Activated CD4-positive, alpha-beta memory T cell treated with anti-CD3 and anti-CD28 coated beads for 36 hours (primary cell): ENCODE measurements at regions of chrX and their contacts with region 1.

Region 1: GRCh38 chrX:101759000-101759399 is 99.3 kb upstream of the ARMCX2 start:
- DNase-seq: peak; percentile 19
- H3K4me3 Mint-ChIP-seq: no peak overlapping the region
- H3K27ac Mint-ChIP-seq: no peak overlapping the region
- H3K4me1 Mint-ChIP-seq: no peaks in the 10 kb centered on the region
- H3K27me3 Mint-ChIP-seq: peaks cover 2% of the 10 kb centered on the region

Region 2: DNA sequence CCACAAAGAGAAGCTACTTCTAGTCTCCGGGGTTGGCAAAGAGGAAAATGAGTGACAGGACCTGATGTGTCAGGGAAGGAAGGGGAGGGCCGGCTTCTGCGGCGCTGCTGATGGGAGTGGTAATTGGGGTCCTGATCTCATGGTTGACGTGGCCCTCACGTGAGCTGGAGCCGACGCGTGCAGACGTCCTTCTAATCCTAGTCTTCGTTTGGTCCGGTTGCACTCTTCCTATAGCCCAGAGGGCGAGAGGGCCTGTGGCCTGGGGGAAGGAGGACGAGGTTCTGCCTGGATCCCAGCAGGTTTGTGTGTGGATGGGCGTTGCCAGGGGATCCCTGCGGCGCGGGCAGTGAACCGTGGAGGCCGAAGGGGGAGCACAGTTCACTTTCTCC is 208.6 kb before region 1 on chrX and contains the start of gene ARMCX1:
- CTCF ChIA-PET with region 1: no interaction called
- POLR2A ChIA-PET with region 1: no interaction called
- intact Hi-C with region 1: no loop called
- DNase-seq: peak; percentile 39
- H3K4me3 Mint-ChIP-seq: peak within 1 kb of the TSS; percentile 66
- H3K27ac Mint-ChIP-seq: no peak within 1 kb of the TSS
- H3K4me1 Mint-ChIP-seq: peaks cover 6% of the 10 kb centered on the region
- H3K27me3 Mint-ChIP-seq: peaks cover 14% of the 10 kb centered on the region
- total RNA-seq, gene ARMCX1: 1.4 to 1.6 TPM

Region 3: DNA sequence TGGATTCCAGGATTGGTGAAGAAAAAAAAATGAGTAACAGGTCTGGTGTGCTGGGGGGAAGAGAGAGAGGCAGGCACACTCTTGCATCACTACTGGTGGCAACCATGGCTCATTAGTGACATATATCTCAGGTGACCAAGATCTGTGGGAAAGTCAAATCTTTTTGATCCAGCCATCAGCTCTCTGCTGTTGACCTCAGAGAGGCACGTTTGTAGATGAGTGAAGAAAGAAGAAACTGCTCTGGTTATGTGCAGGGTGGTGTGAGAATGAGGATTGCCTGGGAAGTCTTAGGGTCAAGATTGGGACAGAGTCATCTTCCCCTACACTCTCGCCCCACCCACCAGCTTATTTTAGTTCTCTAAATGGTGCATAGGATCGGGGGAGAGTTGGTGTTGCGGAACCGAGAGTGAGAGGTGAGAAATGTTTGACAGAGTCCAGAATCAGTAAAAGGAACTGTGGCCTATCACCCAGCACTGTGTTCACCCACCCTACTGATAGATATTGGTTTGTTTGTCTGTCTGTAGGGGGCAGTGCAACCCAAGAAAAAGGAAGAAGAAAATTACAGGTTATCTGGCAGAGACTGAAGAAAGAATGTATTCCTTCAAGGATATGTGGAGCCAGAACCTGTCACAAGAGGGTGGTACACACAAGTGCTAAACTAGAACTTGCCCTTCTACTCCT is 163.1 kb before region 1 on chrX:
- CTCF ChIA-PET with region 1: interaction called, 21 read pairs
- POLR2A ChIA-PET with region 1: no interaction called
- intact Hi-C with region 1: loop called (anchors 5 kb)
- DNase-seq: no peak
- H3K4me3 Mint-ChIP-seq: no peak overlapping the region
- H3K27ac Mint-ChIP-seq: no peak overlapping the region
- H3K4me1 Mint-ChIP-seq: no peaks in the 10 kb centered on the region
- H3K27me3 Mint-ChIP-seq: peaks cover 6% of the 10 kb centered on the region

Region 4: DNA sequence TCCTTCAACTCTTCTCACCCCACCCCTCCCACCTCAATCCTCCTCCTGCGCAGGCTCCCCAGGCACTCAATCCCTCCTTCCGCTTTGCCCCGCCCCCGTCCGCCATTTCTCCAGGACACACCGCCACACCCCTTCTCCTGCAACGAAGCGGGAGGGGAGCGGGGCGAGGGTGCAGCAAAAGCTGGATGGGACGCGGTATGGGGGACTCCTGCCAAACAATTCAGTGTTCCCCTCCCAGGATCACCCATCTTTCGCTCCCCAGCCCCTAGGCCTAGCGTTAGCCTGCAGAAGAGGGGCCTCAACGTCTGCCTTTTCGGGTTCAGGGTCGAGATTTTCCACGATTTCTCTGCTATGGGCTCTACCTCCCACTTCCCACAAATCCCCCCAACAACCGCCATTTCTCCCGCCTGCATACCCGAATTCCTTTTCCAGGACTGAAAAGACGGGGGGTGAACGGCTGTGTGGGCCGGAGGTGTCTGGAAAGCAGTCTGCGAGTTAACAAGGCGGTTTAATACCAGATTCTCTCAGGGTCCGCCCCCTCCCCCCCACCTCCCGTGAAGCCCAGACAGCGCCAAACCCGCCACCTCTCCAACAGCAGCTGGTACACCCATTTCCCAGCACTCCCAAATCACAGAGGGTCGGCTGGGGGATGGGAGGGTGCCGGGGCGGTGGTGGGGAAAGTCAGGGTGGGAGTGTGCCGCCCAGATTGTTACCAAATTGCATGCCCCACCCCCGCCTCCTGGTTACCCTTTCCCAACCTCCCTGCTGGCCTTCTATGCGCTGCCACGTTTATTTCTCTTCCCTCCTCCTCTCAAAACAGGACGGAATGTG is 100.1 kb before region 1 on chrX:
- CTCF ChIA-PET with region 1: no interaction called
- POLR2A ChIA-PET with region 1: no interaction called
- intact Hi-C with region 1: loop called (anchors 10 kb)
- DNase-seq: peak; percentile 77
- H3K4me3 Mint-ChIP-seq: peak overlapping the region; percentile 74
- H3K27ac Mint-ChIP-seq: peak overlapping the region; percentile 2
- H3K4me1 Mint-ChIP-seq: peaks cover 18% of the 10 kb centered on the region
- H3K27me3 Mint-ChIP-seq: no peaks in the 10 kb centered on the region

Region 5: DNA sequence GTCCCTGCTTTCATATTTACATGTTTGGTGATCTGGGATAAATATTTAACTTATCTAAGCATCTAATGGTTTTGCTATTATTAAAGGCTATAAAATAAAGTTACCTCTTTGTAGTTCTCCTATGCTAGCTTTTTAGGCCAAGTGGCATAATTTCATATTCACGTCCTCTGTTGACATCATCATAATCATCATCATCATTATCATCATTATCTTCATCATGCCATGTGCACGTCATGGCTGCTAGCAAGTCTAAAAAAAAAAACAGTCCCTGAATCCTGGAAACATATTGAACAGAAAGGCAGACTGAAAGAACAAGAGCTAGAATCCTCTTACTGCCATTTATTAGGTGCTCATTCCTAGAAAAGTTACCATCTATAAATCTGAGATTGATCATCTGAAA is 15.7 kb before region 1 on chrX:
- CTCF ChIA-PET with region 1: no interaction called
- POLR2A ChIA-PET with region 1: no interaction called
- intact Hi-C with region 1: no loop called
- DNase-seq: no peak
- H3K4me3 Mint-ChIP-seq: no peak overlapping the region
- H3K27ac Mint-ChIP-seq: no peak overlapping the region
- H3K4me1 Mint-ChIP-seq: no peaks in the 10 kb centered on the region
- H3K27me3 Mint-ChIP-seq: peaks cover 1% of the 10 kb centered on the region